ENCODE measurements at regions of chr12 and their contacts with region 1.

Region 1: GRCh38 chr12:6921996-6922946 is 5.5 kb upstream of the ATN1 start:
- DNase-seq: no peak
- ATAC-seq: no peak
- H3K4me3 ChIP-seq: no peak overlapping the region
- H3K4me3 Mint-ChIP-seq: no peak overlapping the region
- H3K27ac ChIP-seq: no peak overlapping the region
- H3K27ac Mint-ChIP-seq: no peak overlapping the region
- H3K4me1 ChIP-seq: peaks cover 21% of the 10 kb centered on the region
- H3K4me1 Mint-ChIP-seq: peaks cover 24% of the 10 kb centered on the region
- H3K27me3 ChIP-seq: no peaks in the 10 kb centered on the region
- H3K27me3 Mint-ChIP-seq: no peaks in the 10 kb centered on the region
- CTCF ChIP-seq: no peak

Region 2: GRCh38 chr12:6620137-6620884 is 302.0 kb before region 1 on chr12:
- CTCF ChIA-PET with region 1: no interaction called
- POLR2A ChIA-PET with region 1: no interaction called
- intact Hi-C with region 1: no loop called
- DNase-seq: peak in 12 of 14 experiments; percentile 26 to 85 (median 50)
- ATAC-seq: peak; percentile 75
- H3K4me3 ChIP-seq: peak overlapping the region; percentile 17
- H3K4me3 Mint-ChIP-seq: peak overlapping the region; percentile 70
- H3K27ac ChIP-seq: peak overlapping the region in 1 of 2 donors; percentile 21
- H3K27ac Mint-ChIP-seq: peak overlapping the region; percentile 65
- H3K4me1 ChIP-seq: peaks cover 13% of the 10 kb centered on the region
- H3K4me1 Mint-ChIP-seq: peaks cover 15% of the 10 kb centered on the region
- H3K27me3 ChIP-seq: no peaks in the 10 kb centered on the region
- H3K27me3 Mint-ChIP-seq: no peaks in the 10 kb centered on the region
- CTCF ChIP-seq: peak; percentile 75

Region 3: DNA sequence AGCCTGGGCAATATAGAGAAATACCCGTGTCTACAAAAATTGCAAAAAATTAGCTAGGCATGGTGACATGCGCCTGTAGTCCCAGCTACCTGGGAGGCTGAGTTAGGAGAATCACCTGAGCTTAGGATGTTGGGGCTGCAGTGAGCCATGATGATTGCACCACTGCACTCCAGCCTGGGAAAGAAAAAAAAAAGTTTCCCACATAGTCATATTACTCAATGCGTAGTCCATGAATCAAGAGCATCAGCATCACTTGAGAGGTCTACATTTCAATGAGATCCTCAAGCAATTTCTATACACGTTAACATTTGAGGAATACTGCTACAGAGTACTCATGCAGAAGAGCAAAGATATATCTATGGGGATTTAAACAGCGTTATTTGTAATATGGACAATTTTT is 22.8 kb before region 1 on chr12:
- CTCF ChIA-PET with region 1: no interaction called
- POLR2A ChIA-PET with region 1: no interaction called
- intact Hi-C with region 1: no loop called
- DNase-seq: no peak
- ATAC-seq: no peak
- H3K4me3 ChIP-seq: no peak overlapping the region
- H3K4me3 Mint-ChIP-seq: no peak overlapping the region
- H3K27ac ChIP-seq: no peak overlapping the region
- H3K27ac Mint-ChIP-seq: no peak overlapping the region
- H3K4me1 ChIP-seq: peaks cover 8% of the 10 kb centered on the region
- H3K4me1 Mint-ChIP-seq: no peaks in the 10 kb centered on the region
- H3K27me3 ChIP-seq: no peaks in the 10 kb centered on the region
- H3K27me3 Mint-ChIP-seq: no peaks in the 10 kb centered on the region
- CTCF ChIP-seq: no peak

Region 4: DNA sequence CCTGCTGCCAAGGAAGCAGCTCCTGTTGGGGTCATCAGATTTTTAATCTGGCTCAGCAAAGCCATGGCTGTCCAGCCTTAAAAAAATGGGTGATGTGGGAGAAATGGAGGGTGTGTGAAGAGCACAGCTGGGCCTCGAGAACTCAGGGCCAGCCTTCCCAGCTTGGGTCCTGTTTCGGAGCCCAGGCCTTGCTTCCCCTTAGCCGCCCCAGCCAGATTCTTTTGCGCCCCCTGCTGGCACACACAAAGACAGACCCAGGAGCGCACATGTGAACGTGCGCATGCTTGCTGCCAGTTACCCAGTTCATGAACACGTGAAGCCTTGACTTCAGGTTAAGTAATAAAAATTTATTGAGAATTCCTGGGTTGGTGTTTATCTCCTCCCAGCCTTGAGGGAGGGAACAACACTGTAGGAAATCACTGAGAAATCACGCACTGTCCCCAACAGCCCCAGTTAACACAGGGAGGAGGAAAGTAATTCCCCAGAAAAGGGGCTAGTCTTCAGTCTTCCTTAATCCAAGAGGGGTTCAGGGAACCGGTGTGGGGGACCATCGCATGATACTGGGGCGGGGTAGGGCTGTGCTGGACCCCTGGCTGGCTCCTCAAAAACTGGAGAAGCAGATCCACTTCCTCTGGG is 42.9 kb after region 1 on chr12:
- CTCF ChIA-PET with region 1: interaction called, 9 read pairs
- POLR2A ChIA-PET with region 1: interaction called, 5 read pairs
- intact Hi-C with region 1: loop called in 1 of 2 experiments (anchors 1 kb)
- DNase-seq: peak; percentile 83 to 96 (median 86)
- ATAC-seq: peak; percentile 50
- H3K4me3 ChIP-seq: no peak overlapping the region
- H3K4me3 Mint-ChIP-seq: peak overlapping the region; percentile 79
- H3K27ac ChIP-seq: peak overlapping the region; percentile 38 to 39
- H3K27ac Mint-ChIP-seq: peak overlapping the region; percentile 90
- H3K4me1 ChIP-seq: peaks cover 70% of the 10 kb centered on the region
- H3K4me1 Mint-ChIP-seq: peaks cover 58% of the 10 kb centered on the region
- H3K27me3 ChIP-seq: no peaks in the 10 kb centered on the region
- H3K27me3 Mint-ChIP-seq: no peaks in the 10 kb centered on the region
- CTCF ChIP-seq: peak; percentile 94

Region 5: DNA sequence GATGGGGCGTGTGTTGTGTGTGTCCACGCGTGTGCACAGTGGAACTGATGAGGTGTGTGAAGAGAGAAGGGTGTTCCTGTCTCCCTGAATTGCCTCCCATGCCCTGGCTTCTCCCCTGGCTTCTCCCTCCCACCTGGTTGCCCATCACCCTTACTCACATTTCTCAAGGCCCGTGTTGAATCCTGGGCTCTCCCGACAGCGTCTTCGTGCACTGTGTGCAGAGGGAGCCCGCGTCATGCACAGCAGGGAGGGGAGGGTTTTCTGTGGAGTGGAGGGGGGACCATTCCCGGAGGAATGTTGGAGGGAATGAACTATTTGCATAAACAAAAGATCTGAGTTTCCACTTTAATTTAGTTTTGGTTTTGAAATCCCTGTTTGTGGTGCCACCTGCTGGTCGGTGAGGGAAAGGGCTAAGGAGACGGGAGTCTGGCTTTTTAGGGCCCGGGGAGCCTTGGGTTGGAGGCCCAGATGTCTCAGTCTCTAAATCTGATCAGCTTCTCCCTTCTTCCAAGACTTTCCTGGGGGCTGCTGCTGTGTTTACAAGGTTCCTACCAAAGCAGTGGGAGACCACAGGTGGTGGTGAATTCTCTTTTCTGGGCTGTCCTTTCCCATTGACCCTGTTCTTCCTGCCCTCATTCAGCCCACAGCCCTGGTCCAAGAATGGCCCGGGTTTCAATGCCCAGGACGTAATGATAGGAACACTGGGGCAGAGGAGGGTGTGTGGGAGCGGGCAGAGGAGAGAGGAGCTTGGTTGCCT is 170.1 kb after region 1 on chr12 and contains the start of gene C1R:
- CTCF ChIA-PET with region 1: no interaction called
- POLR2A ChIA-PET with region 1: interaction called, 5 read pairs
- intact Hi-C with region 1: loop called (anchors 1 kb)
- DNase-seq: peak; percentile 57 to 83 (median 66)
- ATAC-seq: peak; percentile 79
- H3K4me3 ChIP-seq: peak within 1 kb of the TSS; percentile 52
- H3K4me3 Mint-ChIP-seq: peak within 1 kb of the TSS; percentile 88
- H3K27ac ChIP-seq: no peak within 1 kb of the TSS
- H3K27ac Mint-ChIP-seq: peak within 1 kb of the TSS; percentile 53
- H3K4me1 ChIP-seq: peaks cover 13% of the 10 kb centered on the region
- H3K4me1 Mint-ChIP-seq: peaks cover 8% of the 10 kb centered on the region
- H3K27me3 ChIP-seq: no peaks in the 10 kb centered on the region
- H3K27me3 Mint-ChIP-seq: no peaks in the 10 kb centered on the region
- CTCF ChIP-seq: peak; percentile 82
- total RNA-seq, gene C1R: 3.1 to 4.0 TPM

Measured in CD4-positive, alpha-beta T cell (primary cell).